ENCODE measurements at regions of chr1 and their contacts with region 1.

Region 1: GRCh38 chr1:197521118-197521739 is 253.2 kb downstream of the CRB1 start:
- DNase-seq: peak in 7 of 35 experiments; percentile 2 to 60 (median 12)
- ATAC-seq: no peak
- H3K4me3 ChIP-seq: no peak overlapping the region
- H3K4me3 Mint-ChIP-seq: no peak overlapping the region
- H3K27ac ChIP-seq: no peak overlapping the region
- H3K27ac Mint-ChIP-seq: no peak overlapping the region
- H3K4me1 ChIP-seq: no peaks in the 10 kb centered on the region
- H3K4me1 Mint-ChIP-seq: peaks cover 0 to 3% (median 0%) of the 10 kb centered on the region in 3 donors
- H3K27me3 ChIP-seq: no peaks in the 10 kb centered on the region
- H3K27me3 Mint-ChIP-seq: no peaks in the 10 kb centered on the region

Region 2: GRCh38 chr1:197099444-197099843 is 421.8 kb before region 1 on chr1:
- CTCF ChIA-PET with region 1: no interaction called
- POLR2A ChIA-PET with region 1: no interaction called
- DNase-seq: no peak
- ATAC-seq: no peak
- H3K4me3 ChIP-seq: no peak overlapping the region
- H3K4me3 Mint-ChIP-seq: no peak overlapping the region
- H3K27ac ChIP-seq: no peak overlapping the region
- H3K27ac Mint-ChIP-seq: no peak overlapping the region
- H3K4me1 ChIP-seq: peaks cover 0 to 10% of the 10 kb centered on the region in 2 experiments
- H3K4me1 Mint-ChIP-seq: peaks cover 29 to 40% (median 32%) of the 10 kb centered on the region in 3 donors
- H3K27me3 ChIP-seq: no peaks in the 10 kb centered on the region
- H3K27me3 Mint-ChIP-seq: no peaks in the 10 kb centered on the region

Region 3: DNA sequence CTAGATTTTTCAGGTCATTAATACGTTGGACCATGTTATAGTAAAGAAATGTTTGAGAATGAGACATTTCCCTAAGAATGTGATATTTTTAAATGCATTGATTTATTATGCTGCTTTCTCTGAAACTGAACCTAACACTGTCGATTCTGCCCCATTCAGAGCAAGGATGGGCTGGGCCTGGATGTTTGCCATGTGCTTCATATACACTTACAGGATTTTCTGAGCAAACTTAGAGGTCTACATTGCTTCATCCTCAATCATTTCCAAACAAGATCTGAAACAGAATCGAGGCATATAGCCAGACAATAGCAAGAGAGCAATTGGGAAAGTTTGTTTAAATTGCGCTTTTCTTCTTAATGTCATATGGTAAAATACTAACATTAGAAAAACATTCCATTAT is 69.8 kb before region 1 on chr1:
- CTCF ChIA-PET with region 1: no interaction called
- POLR2A ChIA-PET with region 1: no interaction called
- DNase-seq: no peak
- ATAC-seq: no peak
- H3K4me3 ChIP-seq: no peak overlapping the region
- H3K4me3 Mint-ChIP-seq: no peak overlapping the region
- H3K27ac ChIP-seq: no peak overlapping the region
- H3K27ac Mint-ChIP-seq: no peak overlapping the region
- H3K4me1 ChIP-seq: no peaks in the 10 kb centered on the region
- H3K4me1 Mint-ChIP-seq: peaks cover 2 to 7% (median 4%) of the 10 kb centered on the region in 3 donors
- H3K27me3 ChIP-seq: no peaks in the 10 kb centered on the region
- H3K27me3 Mint-ChIP-seq: peaks cover 5 to 7% of the 10 kb centered on the region in 2 donors

Region 4: DNA sequence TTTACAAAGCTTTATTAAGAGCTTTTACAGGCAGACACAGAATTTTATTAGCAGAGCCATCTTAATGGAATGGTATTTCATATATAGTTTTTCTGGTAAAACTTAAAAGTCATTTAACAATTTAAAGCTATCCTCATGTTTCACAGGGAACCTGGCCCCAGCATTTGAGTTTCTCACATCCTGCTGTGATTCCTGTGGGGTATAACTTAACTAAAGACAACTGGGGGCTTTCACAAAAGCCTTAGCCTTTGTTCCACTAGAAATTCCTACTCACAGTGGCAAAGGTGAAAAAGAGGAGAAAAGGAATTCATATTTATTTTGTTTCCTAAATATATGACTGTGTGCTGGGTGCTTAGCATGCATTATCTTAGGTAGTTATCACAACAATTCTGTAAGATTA is 20.2 kb after region 1 on chr1:
- CTCF ChIA-PET with region 1: interaction called, 7 to 10 read pairs
- POLR2A ChIA-PET with region 1: no interaction called
- DNase-seq: no peak
- ATAC-seq: no peak
- H3K4me3 ChIP-seq: no peak overlapping the region
- H3K4me3 Mint-ChIP-seq: no peak overlapping the region
- H3K27ac ChIP-seq: no peak overlapping the region
- H3K27ac Mint-ChIP-seq: no peak overlapping the region
- H3K4me1 ChIP-seq: no peaks in the 10 kb centered on the region
- H3K4me1 Mint-ChIP-seq: no peaks in the 10 kb centered on the region
- H3K27me3 ChIP-seq: no peaks in the 10 kb centered on the region
- H3K27me3 Mint-ChIP-seq: no peaks in the 10 kb centered on the region

Region 5: DNA sequence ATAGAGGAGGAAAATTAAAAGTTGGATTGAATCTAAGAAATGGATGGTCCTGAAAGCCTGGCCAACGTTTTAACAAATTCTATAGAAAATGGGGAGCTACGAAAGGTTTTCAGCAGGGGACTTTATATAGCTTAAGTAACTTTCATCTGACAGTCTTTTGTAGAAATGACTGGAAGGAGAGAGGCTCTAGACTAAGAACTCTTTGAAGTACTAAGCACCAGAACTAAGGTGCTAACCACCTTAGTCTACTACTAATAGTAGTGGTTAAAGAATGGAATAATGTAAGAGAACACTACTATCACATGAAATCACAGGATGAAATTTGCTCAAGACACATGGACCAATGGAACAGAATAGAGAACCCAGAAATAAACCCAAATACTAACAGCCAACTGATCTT is 128.0 kb after region 1 on chr1:
- CTCF ChIA-PET with region 1: no interaction called
- POLR2A ChIA-PET with region 1: no interaction called
- DNase-seq: no peak
- ATAC-seq: no peak
- H3K4me3 ChIP-seq: no peak overlapping the region
- H3K4me3 Mint-ChIP-seq: no peak overlapping the region
- H3K27ac ChIP-seq: no peak overlapping the region
- H3K27ac Mint-ChIP-seq: no peak overlapping the region
- H3K4me1 ChIP-seq: no peaks in the 10 kb centered on the region
- H3K4me1 Mint-ChIP-seq: peaks cover 7 to 14% (median 9%) of the 10 kb centered on the region in 3 donors
- H3K27me3 ChIP-seq: no peaks in the 10 kb centered on the region
- H3K27me3 Mint-ChIP-seq: no peaks in the 10 kb centered on the region

Measured in T-cell (primary cell).